K562 (cell line): ENCODE measurements at regions of chr5 and their contacts with region 1.

Region 1: DNA sequence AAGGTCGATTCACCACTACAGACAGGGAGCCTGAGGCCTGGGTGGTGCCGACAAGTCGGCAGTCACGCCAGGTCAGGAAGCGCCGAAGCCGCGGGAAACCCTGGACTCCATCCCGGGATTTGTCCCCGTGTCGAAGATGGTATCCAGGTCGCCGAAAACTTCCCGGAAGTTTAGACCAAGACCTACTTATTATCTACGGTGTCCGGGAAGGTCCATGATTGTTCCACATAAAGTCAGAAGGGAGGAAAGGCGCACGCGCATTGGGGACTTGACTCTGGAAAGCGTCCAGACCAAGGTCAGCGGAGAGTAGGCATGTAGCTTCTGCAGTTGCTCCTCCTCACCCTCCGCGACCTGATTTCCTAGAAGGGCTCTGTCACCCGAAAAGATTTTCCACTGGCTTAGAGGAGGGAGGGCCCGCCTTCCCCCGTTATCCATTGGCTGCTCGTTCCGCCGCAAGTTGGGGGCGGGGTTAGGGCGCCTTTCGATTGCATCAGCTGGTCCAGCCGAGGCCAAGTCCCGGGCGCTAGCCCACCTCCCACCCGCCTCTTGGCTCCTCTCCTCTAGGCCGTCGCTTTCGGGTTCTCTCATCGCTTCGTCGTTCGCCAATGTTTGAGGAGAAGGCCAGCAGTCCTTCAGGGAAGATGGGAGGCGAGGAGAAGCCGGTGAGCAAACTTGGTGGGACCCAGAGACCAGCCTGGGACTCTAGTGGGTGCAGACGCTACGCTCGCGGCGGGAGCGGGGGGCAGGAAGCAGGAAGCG is at the start of gene TARS1:
- DNase-seq: peak; percentile 95 to 100 (median 97)
- ATAC-seq: peak; percentile 91
- H3K4me3 ChIP-seq: peak within 1 kb of the TSS; percentile 94
- H3K27ac ChIP-seq: peak within 1 kb of the TSS; percentile 99
- H3K4me1 ChIP-seq: peaks cover 6 to 13% of the 10 kb centered on the region in 2 experiments; a peak in 4 of 5 replicates
- H3K27me3 ChIP-seq: no peaks in the 10 kb centered on the region
- CTCF ChIP-seq: no peak
- EP300 ChIP-seq: peak; percentile 39
- POLR2A ChIP-seq: peak; percentile 99
- RAD21 ChIP-seq: no peak
- polyA plus RNA-seq, gene TARS1: 263 to 497 TPM

Region 2: DNA sequence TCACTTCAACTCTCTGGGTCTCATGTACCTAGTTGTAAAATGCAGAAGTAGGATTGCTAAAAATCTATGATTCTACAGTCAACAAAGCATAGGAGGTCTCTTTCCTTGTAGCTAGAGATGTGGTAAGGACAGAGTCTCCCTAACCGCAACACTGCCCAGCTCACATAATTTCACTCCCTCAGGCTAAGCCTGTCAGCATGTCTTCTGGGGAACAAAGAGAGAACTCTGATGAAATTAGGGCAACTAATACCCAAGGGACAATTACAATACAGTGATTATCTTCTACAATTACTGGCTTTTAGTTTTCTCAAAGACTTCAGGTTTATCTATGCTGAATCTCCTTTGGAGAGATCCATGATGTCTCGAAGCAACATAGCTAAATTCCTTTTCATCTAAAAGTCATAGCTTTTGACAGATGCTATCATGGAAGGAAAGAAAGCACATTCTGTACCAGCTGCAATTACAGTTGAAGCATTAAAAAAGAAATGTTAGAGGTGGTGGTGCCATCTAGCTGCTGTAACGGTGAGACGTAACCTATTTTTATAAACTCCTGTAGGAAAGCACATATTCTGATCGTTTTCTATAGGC is 140.9 kb before region 1 on chr5:
- CTCF ChIA-PET with region 1: no interaction called
- POLR2A ChIA-PET with region 1: no interaction called
- in situ Hi-C with region 1: no loop called
- intact Hi-C with region 1: no loop called
- DNase-seq: no peak
- ATAC-seq: no peak
- H3K4me3 ChIP-seq: no peak overlapping the region
- H3K27ac ChIP-seq: no peak overlapping the region
- H3K4me1 ChIP-seq: peaks cover 0 to 3% of the 10 kb centered on the region in 2 experiments; a peak in 1 of 5 replicates
- H3K27me3 ChIP-seq: no peaks in the 10 kb centered on the region
- CTCF ChIP-seq: peak in 1 of 3 experiments; percentile 30; a peak in 2 of 6 replicates
- EP300 ChIP-seq: no peak
- POLR2A ChIP-seq: no peak
- RAD21 ChIP-seq: peak in 1 of 2 experiments; percentile 24; a peak in 2 of 4 replicates

Region 3: DNA sequence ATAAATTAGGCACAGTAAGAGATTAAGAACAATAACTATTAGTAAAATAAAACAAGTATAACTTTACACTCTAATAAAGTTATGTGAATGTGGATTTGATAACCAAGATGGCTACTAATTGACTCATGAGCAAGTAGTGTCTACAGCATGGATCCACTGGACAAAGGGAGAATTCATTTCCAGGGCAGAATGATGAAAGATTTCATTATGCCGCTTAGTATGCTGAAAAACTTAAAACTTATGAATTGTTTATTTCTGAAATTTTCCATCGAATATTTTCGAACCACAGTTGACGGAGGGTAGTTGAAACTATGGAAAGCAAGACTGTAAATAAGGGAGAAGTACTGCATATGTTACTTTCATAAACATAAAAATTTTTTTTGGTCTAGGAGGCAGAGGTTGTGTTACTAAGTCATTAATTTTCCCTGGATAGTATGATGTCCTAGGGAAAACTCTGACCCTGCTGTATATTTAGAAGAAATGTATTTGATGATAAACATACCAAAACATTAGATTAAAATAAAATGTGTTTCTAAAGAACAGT is 24.8 kb before region 1 on chr5:
- CTCF ChIA-PET with region 1: no interaction called
- POLR2A ChIA-PET with region 1: no interaction called
- in situ Hi-C with region 1: no loop called
- intact Hi-C with region 1: no loop called
- DNase-seq: no peak
- ATAC-seq: no peak
- H3K4me3 ChIP-seq: no peak overlapping the region
- H3K27ac ChIP-seq: no peak overlapping the region
- H3K4me1 ChIP-seq: no peaks in the 10 kb centered on the region
- H3K27me3 ChIP-seq: peaks cover 0 to 3% of the 10 kb centered on the region in 2 experiments; a peak in 1 of 5 replicates
- CTCF ChIP-seq: no peak
- EP300 ChIP-seq: no peak
- POLR2A ChIP-seq: no peak
- RAD21 ChIP-seq: no peak

Region 4: DNA sequence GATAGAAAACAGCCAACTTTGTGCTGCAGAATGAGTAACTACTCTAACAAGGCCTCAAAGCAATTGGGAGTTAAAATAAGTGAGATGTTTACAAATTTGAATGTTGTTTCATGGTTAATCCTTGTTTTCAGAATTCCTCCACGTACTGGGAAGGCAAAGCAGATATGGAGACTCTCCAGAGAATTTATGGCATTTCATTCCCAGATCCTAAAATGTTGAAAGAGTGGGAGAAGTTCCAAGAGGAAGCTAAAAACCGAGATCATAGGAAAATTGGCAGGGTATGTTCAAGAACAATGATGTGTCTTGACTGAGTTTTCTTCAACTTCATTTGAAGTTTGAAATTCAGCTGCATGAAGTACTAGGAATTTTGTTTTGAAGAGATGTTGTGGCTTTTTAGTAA is 16.5 kb after region 1 on chr5:
- CTCF ChIA-PET with region 1: no interaction called
- POLR2A ChIA-PET with region 1: interaction called, 10 read pairs
- in situ Hi-C with region 1: no loop called
- intact Hi-C with region 1: no loop called
- DNase-seq: no peak
- ATAC-seq: no peak
- H3K4me3 ChIP-seq: no peak overlapping the region
- H3K27ac ChIP-seq: no peak overlapping the region
- H3K4me1 ChIP-seq: peaks cover 0 to 9% of the 10 kb centered on the region in 2 experiments; a peak in 3 of 5 replicates
- H3K27me3 ChIP-seq: no peaks in the 10 kb centered on the region
- CTCF ChIP-seq: no peak
- EP300 ChIP-seq: no peak
- POLR2A ChIP-seq: no peak
- RAD21 ChIP-seq: no peak

Region 5: DNA sequence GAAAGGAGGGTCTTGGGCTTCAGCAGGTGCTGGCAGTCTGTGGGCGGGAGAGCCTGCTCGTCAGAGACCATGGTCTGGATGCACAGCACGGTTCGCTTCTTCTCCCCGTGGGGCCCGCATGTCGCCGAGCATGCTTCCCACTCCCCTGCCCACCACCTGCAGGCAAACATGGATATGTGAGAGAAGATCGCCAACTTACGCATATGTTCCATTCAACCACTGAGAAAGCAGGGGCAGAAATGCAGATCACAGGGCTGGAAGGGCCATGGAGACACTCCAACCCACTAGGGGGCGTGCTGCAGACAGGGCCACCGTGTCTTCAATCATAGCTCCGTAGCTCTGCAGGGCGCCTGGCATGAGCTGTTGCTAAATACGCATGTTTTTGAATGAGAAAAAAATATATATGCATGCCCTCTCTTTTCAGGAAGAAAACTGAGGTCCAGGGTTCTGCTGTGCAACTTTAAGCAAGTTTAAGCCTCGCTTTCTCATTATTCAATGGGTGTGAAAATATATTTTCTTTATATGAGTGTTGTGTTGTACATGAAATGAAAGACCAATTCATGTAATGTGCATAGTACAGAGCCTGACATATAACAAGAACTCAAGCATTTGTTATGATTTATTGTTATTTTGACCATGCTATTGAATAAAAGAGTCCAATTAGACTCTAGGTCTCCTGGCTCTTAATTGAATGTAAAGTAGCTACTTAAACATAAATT is 148.2 kb after region 1 on chr5:
- CTCF ChIA-PET with region 1: no interaction called
- POLR2A ChIA-PET with region 1: no interaction called
- in situ Hi-C with region 1: no loop called
- intact Hi-C with region 1: loop called (anchors 5 kb)
- DNase-seq: peak; percentile 47 to 80 (median 58)
- ATAC-seq: peak; percentile 100
- H3K4me3 ChIP-seq: no peak overlapping the region
- H3K27ac ChIP-seq: no peak overlapping the region
- H3K4me1 ChIP-seq: peaks cover 0 to 4% of the 10 kb centered on the region in 2 experiments; a peak in 2 of 5 replicates
- H3K27me3 ChIP-seq: peaks cover 0 to 5% of the 10 kb centered on the region in 2 experiments; a peak in 1 of 5 replicates
- CTCF ChIP-seq: peak; percentile 70 to 91 (median 76)
- EP300 ChIP-seq: no peak
- POLR2A ChIP-seq: no peak
- RAD21 ChIP-seq: peak; percentile 36 to 63

Region 6: GRCh38 chr5:33611877-33612276 is 171.2 kb after region 1 on chr5:
- CTCF ChIA-PET with region 1: no interaction called
- POLR2A ChIA-PET with region 1: no interaction called
- in situ Hi-C with region 1: no loop called
- intact Hi-C with region 1: no loop called
- DNase-seq: no peak
- ATAC-seq: no peak
- H3K4me3 ChIP-seq: no peak overlapping the region
- H3K27ac ChIP-seq: no peak overlapping the region
- H3K4me1 ChIP-seq: no peaks in the 10 kb centered on the region
- H3K27me3 ChIP-seq: peaks cover 2 to 4% of the 10 kb centered on the region in 2 experiments; a peak in 3 of 5 replicates
- CTCF ChIP-seq: no peak
- EP300 ChIP-seq: no peak
- POLR2A ChIP-seq: no peak
- RAD21 ChIP-seq: no peak

Region 7: GRCh38 chr5:33921002-33921401 is 480.3 kb after region 1 on chr5:
- CTCF ChIA-PET with region 1: no interaction called
- POLR2A ChIA-PET with region 1: no interaction called
- in situ Hi-C with region 1: loop called (anchors 5 kb)
- intact Hi-C with region 1: no loop called
- DNase-seq: no peak
- ATAC-seq: no peak
- H3K4me3 ChIP-seq: no peak overlapping the region
- H3K27ac ChIP-seq: no peak overlapping the region
- H3K4me1 ChIP-seq: no peaks in the 10 kb centered on the region
- H3K27me3 ChIP-seq: no peaks in the 10 kb centered on the region
- CTCF ChIP-seq: no peak
- EP300 ChIP-seq: no peak
- POLR2A ChIP-seq: no peak
- RAD21 ChIP-seq: no peak

Region 8: GRCh38 chr5:34459908-34460307 is 1019.2 kb after region 1 on chr5:
- CTCF ChIA-PET with region 1: no interaction called
- POLR2A ChIA-PET with region 1: no interaction called
- in situ Hi-C with region 1: loop called (anchors 25 kb)
- intact Hi-C with region 1: loop called (anchors 10 kb)
- DNase-seq: no peak
- ATAC-seq: no peak
- H3K4me3 ChIP-seq: no peak overlapping the region
- H3K27ac ChIP-seq: no peak overlapping the region
- H3K4me1 ChIP-seq: no peaks in the 10 kb centered on the region
- H3K27me3 ChIP-seq: no peaks in the 10 kb centered on the region
- CTCF ChIP-seq: no peak
- EP300 ChIP-seq: no peak
- POLR2A ChIP-seq: no peak
- RAD21 ChIP-seq: no peak